ENCODE measurements at regions of chr16 and their contacts with region 1.

Region 1: DNA sequence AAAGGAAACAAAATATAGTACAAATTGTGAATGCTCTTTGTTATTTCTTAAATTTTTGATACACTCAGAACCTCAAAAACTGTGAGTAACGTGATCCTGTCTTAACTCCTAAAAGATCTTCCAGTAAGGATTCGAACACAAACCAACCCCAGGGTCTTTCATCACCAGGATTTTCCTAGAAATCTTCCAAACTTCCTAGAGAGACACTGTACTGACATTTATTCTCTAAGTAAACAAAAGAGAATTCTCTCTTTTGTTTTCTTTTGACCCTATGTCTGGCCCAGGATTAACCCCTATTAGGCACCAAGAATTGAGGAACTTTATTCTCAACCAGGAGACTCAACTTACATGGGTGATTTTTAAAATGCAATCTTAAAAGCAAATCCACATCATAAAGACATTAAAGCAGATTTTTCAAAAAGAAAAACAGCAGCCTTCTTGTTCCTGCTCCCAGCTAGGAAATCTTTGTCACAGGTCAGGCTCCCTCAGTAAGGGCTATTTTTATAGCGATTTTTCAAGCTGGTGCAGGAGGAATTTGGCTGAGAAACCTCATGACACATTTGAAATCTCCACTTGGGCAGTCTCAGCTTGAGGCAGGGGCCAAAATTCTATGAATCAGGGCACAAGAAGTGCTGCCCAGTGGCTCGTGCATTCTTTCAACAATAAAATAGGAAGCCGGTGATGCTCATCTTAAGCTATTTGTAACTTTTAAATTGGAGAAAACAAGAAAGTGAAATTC is 6.2 kb upstream of the SMG1 start:
- DNase-seq: no peak
- ATAC-seq: no peak
- H3K4me3 ChIP-seq: no peak overlapping the region
- H3K27ac ChIP-seq: no peak overlapping the region
- H3K4me1 ChIP-seq: peaks cover 12% of the 10 kb centered on the region; the same call in 1 of the 2 replicates
- H3K27me3 ChIP-seq: no peaks in the 10 kb centered on the region
- CTCF ChIP-seq: no peak

Region 2: GRCh38 chr16:18999045-18999393 is 66.6 kb after region 1 on chr16:
- CTCF ChIA-PET with region 1: no interaction called
- POLR2A ChIA-PET with region 1: interaction called, 10 read pairs
- in situ Hi-C with region 1: no loop called
- intact Hi-C with region 1: no loop called
- DNase-seq: no peak
- ATAC-seq: peak; percentile 13
- H3K4me3 ChIP-seq: peak overlapping the region in 1 of 2 experiments; percentile 12; a peak in 1 of 4 replicates
- H3K27ac ChIP-seq: peak overlapping the region; percentile 96
- H3K4me1 ChIP-seq: peaks cover 29% of the 10 kb centered on the region
- H3K27me3 ChIP-seq: no peaks in the 10 kb centered on the region
- CTCF ChIP-seq: no peak

Region 3: DNA sequence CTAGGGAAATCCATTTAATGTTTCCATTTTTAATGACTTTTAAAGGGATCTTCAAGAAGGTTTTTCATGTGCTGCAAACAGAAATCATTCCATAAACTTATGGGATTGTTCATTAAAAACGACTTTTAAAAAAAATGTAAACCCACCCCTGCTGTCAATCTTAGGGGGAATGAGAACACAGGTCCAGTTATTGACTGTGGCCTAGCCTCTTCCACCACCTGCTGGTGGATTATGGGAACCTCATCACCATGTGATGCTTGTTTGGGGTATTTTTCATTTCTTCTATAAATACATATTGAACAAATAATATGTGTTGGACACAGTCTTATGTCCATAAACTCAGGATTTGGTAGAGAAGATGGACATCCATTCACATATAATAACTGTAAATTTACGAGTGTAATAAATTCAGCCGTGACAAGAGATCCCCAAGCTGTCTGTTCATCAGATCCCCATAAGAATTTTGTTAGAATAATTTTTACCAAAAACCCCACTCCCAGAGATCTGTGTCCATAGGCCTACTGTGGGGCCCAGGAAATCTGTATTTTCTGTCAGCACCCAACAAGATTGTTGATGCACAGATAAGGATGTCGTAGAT is 443.2 kb after region 1 on chr16:
- CTCF ChIA-PET with region 1: no interaction called
- POLR2A ChIA-PET with region 1: no interaction called
- in situ Hi-C with region 1: no loop called
- intact Hi-C with region 1: no loop called
- DNase-seq: peak; percentile 55
- ATAC-seq: peak; percentile 89
- H3K4me3 ChIP-seq: no peak overlapping the region
- H3K27ac ChIP-seq: no peak overlapping the region
- H3K4me1 ChIP-seq: no peaks in the 10 kb centered on the region
- H3K27me3 ChIP-seq: no peaks in the 10 kb centered on the region
- CTCF ChIP-seq: peak; percentile 92

Region 4: DNA sequence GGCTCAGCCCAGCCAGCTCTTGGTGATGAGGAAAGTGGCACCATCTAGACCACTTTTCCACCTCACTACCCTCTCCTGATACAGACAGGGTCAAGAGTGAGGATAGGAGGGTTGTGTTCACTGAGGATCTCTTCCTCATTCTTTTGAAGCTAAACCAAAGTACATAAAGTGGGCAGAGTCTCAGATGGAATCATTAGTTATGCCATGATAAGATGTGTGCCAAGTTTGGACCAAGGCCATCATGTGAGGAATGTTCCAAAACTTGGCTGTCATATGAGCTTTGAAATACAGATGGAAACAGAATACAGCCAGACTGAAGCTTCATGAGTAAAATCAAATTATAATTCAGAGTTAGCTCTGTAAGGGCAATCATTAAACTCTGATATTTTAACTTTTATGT is 1727.9 kb after region 1 on chr16:
- CTCF ChIA-PET with region 1: no interaction called
- POLR2A ChIA-PET with region 1: no interaction called
- in situ Hi-C with region 1: no loop called
- intact Hi-C with region 1: no loop called
- DNase-seq: no peak
- ATAC-seq: no peak
- H3K4me3 ChIP-seq: no peak overlapping the region
- H3K27ac ChIP-seq: no peak overlapping the region
- H3K4me1 ChIP-seq: no peaks in the 10 kb centered on the region
- H3K27me3 ChIP-seq: 0 out of 2 replicates have a peak, but pooled peaks cover 5% of the 10 kb centered on the region
- CTCF ChIP-seq: no peak